ENCODE measurements at regions of chrX and their contacts with region 1.

Region 1: GRCh38 chrX:5113128-5113527 is 1115.5 kb downstream of the NLGN4X start:
- DNase-seq: peak; percentile 1
- H3K4me3 Mint-ChIP-seq: no peak overlapping the region
- H3K27ac Mint-ChIP-seq: no peak overlapping the region
- H3K4me1 Mint-ChIP-seq: no peaks in the 10 kb centered on the region
- H3K27me3 Mint-ChIP-seq: no peaks in the 10 kb centered on the region
- CTCF ChIP-seq: no peak

Region 2: GRCh38 chrX:3962511-3963311 is 1150.4 kb before region 1 on chrX:
- CTCF ChIA-PET with region 1: no interaction called
- intact Hi-C with region 1: loop called (anchors 2 kb)
- DNase-seq: peak; percentile 65
- H3K4me3 Mint-ChIP-seq: peak overlapping the region; percentile 59
- H3K27ac Mint-ChIP-seq: peak overlapping the region; percentile 58
- H3K4me1 Mint-ChIP-seq: peaks cover 24% of the 10 kb centered on the region
- H3K27me3 Mint-ChIP-seq: no peaks in the 10 kb centered on the region
- CTCF ChIP-seq: peak; percentile 37

Region 3: GRCh38 chrX:4263030-4263803 is 849.9 kb before region 1 on chrX:
- CTCF ChIA-PET with region 1: no interaction called
- intact Hi-C with region 1: loop called (anchors 10 kb)
- DNase-seq: peak; percentile 15
- H3K4me3 Mint-ChIP-seq: no peak overlapping the region
- H3K27ac Mint-ChIP-seq: no peak overlapping the region
- H3K4me1 Mint-ChIP-seq: peaks cover 6% of the 10 kb centered on the region
- H3K27me3 Mint-ChIP-seq: no peaks in the 10 kb centered on the region
- CTCF ChIP-seq: no peak

Region 4: GRCh38 chrX:4547213-4547836 is 565.8 kb before region 1 on chrX:
- CTCF ChIA-PET with region 1: no interaction called
- intact Hi-C with region 1: loop called (anchors 1 kb)
- DNase-seq: peak; percentile 41
- H3K4me3 Mint-ChIP-seq: no peak overlapping the region
- H3K27ac Mint-ChIP-seq: no peak overlapping the region
- H3K4me1 Mint-ChIP-seq: peaks cover 6% of the 10 kb centered on the region
- H3K27me3 Mint-ChIP-seq: no peaks in the 10 kb centered on the region
- CTCF ChIP-seq: peak; percentile 82

Region 5: DNA sequence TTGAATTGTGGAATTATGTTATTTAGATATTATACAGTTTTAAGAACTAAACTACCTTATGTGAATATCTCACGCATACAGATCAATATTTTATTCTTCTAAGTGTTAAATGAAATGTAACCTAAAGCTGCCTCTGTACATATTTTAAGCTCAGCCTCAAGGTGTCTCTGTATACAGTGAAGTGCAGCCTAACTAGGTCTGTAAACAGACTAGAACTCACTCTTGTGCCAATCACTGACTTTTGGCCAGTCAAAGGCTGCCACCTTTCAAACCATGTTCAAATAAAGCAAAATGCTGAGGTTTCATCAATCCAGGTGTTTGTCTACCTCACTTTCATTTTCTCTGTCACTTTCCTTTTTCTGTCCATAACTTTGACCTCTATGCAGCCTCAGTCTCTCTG is 325.1 kb before region 1 on chrX:
- CTCF ChIA-PET with region 1: no interaction called
- intact Hi-C with region 1: loop called (anchors 2 kb)
- DNase-seq: no peak
- H3K4me3 Mint-ChIP-seq: no peak overlapping the region
- H3K27ac Mint-ChIP-seq: no peak overlapping the region
- H3K4me1 Mint-ChIP-seq: no peaks in the 10 kb centered on the region
- H3K27me3 Mint-ChIP-seq: no peaks in the 10 kb centered on the region
- CTCF ChIP-seq: no peak

Region 6: GRCh38 chrX:4909348-4909747 is 203.8 kb before region 1 on chrX:
- CTCF ChIA-PET with region 1: no interaction called
- intact Hi-C with region 1: no loop called
- DNase-seq: no peak
- H3K4me3 Mint-ChIP-seq: no peak overlapping the region
- H3K27ac Mint-ChIP-seq: no peak overlapping the region
- H3K4me1 Mint-ChIP-seq: peaks cover 8% of the 10 kb centered on the region
- H3K27me3 Mint-ChIP-seq: no peaks in the 10 kb centered on the region
- CTCF ChIP-seq: no peak

Measured in Calu3 (cell line).